B cell (primary cell): ENCODE measurements at regions of chr16 and their contacts with region 1.

Region 1: GRCh38 chr16:50152807-50153452 is at the start of gene TENT4B:
- DNase-seq: peak; percentile 96
- ATAC-seq: peak; percentile 81
- H3K4me3 ChIP-seq: peak within 1 kb of the TSS; percentile 46 to 93 (median 82)
- H3K4me3 Mint-ChIP-seq: peak within 1 kb of the TSS; percentile 90
- H3K27ac ChIP-seq: peak within 1 kb of the TSS; percentile 85 to 86
- H3K27ac Mint-ChIP-seq: peak within 1 kb of the TSS; percentile 94
- H3K4me1 ChIP-seq: peaks cover 23 to 28% of the 10 kb centered on the region in 2 donors
- H3K4me1 Mint-ChIP-seq: peaks cover 34% of the 10 kb centered on the region
- H3K27me3 ChIP-seq: no peaks in the 10 kb centered on the region
- H3K27me3 Mint-ChIP-seq: no peaks in the 10 kb centered on the region
- CTCF ChIP-seq: no peak
- total RNA-seq, gene TENT4B: 17.1 and 18.6 TPM in 2 replicates

Region 2: GRCh38 chr16:50024684-50025536 is 128.0 kb before region 1 on chr16 and contains the start of gene CNEP1R1:
- CTCF ChIA-PET with region 1: interaction called, 10 read pairs
- POLR2A ChIA-PET with region 1: interaction called, 4 read pairs
- intact Hi-C with region 1: loop called (anchors 2 kb)
- DNase-seq: peak; percentile 98
- ATAC-seq: peak; percentile 94
- H3K4me3 ChIP-seq: peak within 1 kb of the TSS; percentile 87 to 93 (median 92)
- H3K4me3 Mint-ChIP-seq: peak within 1 kb of the TSS; percentile 93
- H3K27ac ChIP-seq: peak within 1 kb of the TSS; percentile 31 to 78
- H3K27ac Mint-ChIP-seq: peak within 1 kb of the TSS; percentile 89
- H3K4me1 ChIP-seq: peaks cover 12 to 14% of the 10 kb centered on the region in 2 donors
- H3K4me1 Mint-ChIP-seq: peaks cover 23% of the 10 kb centered on the region
- H3K27me3 ChIP-seq: no peaks in the 10 kb centered on the region
- H3K27me3 Mint-ChIP-seq: peaks cover 7% of the 10 kb centered on the region
- CTCF ChIP-seq: peak; percentile 100
- total RNA-seq, gene CNEP1R1: 32.9 and 36.9 TPM in 2 replicates

Region 3: DNA sequence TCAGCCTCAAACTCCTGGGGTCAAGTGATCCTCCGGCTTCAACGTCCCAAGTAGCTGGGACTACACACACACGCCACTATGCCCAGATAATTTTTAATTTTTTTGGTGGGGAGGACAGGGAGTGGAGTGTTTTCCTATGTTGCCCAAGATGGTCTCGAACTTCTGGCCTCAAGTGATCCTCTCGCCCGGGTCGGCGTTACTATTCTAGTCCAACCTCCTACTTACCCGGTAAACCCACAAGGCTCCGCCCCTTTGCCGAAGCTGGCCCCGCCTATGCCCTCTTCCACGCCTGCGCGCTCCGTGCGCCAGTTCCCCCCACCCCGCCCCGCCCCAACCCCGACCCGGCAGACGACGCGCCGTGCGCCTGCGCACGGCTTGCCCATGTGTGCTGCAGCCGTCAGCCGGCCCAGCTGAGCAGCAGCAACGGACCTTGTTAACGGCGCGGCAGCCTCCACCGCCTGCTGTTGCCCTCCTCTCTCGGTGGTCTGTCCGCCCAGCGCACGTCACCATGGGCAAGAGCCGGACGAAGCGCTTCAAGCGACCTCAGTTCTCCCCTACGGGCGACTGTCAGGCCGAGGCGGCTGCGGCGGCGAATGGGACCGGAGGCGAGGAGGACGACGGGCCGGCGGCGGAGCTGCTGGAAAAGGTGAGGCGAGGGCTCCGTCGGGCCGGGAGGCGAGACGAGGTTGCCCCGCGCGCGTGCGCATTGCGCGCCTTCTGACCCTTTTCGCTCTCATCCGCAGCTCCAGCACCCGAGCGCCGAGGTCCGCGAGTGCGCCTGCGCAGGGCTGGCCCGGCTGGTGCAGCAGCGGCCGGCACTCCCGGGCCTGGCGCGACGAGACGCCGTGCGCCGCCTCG is 87.1 kb before region 1 on chr16 and contains the start of gene HEATR3:
- CTCF ChIA-PET with region 1: interaction called, 8 read pairs
- POLR2A ChIA-PET with region 1: interaction called, 6 read pairs
- intact Hi-C with region 1: loop called (anchors 1 kb)
- DNase-seq: peak; percentile 95
- ATAC-seq: peak; percentile 86
- H3K4me3 ChIP-seq: peak within 1 kb of the TSS; percentile 39 to 82 (median 75)
- H3K4me3 Mint-ChIP-seq: peak within 1 kb of the TSS; percentile 89
- H3K27ac ChIP-seq: peak within 1 kb of the TSS; percentile 47 to 63
- H3K27ac Mint-ChIP-seq: peak within 1 kb of the TSS; percentile 92
- H3K4me1 ChIP-seq: peaks cover 17 to 20% of the 10 kb centered on the region in 2 donors
- H3K4me1 Mint-ChIP-seq: peaks cover 35% of the 10 kb centered on the region
- H3K27me3 ChIP-seq: no peaks in the 10 kb centered on the region
- H3K27me3 Mint-ChIP-seq: no peaks in the 10 kb centered on the region
- CTCF ChIP-seq: no peak
- total RNA-seq, gene HEATR3: 21.0 and 21.2 TPM in 2 replicates

Region 4: DNA sequence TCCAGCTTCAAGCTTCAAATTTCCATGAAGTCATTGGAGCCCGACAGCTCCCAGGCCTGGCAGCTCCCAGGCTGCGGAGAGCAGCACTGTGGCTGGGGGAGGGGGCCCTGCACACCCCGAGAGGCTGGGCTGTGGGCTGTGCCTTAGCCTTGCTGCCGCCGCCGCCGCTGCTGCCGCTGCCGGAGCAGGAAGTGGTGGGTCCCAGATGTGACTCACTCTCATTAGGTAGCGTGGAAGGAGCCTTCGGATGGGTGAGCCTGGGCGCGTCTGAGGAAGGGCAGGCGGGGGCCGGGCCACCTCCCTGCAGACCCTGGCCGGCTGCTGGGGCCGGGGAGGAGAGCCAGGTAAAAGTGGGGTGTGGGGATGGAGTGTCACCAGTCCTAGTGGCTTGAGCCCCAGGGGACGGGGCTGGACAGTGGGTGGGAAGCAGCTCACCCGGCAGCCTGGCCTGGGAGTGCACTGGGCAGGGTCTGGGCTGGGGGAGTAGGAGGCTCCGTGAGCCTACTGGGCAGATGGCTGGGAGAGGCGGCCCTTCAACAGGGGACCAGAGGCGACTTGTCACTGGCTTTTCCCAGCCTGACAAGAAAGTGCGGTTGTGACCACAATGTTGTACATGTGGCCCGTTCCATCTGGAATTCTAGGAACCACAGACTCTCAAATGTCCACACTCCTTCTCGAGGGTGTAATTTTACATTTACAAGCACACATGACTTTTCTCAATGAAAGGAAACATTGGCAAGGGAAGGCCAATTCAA is 113.6 kb after region 1 on chr16 and contains the start of gene ADCY7:
- CTCF ChIA-PET with region 1: no interaction called
- POLR2A ChIA-PET with region 1: no interaction called
- intact Hi-C with region 1: loop called (anchors 5 kb)
- DNase-seq: peak; percentile 75
- ATAC-seq: peak; percentile 91
- H3K4me3 ChIP-seq: peak within 1 kb of the TSS; percentile 56 to 68 (median 59)
- H3K4me3 Mint-ChIP-seq: peak within 1 kb of the TSS; percentile 90
- H3K27ac ChIP-seq: peak within 1 kb of the TSS; percentile 43 to 79
- H3K27ac Mint-ChIP-seq: peak within 1 kb of the TSS; percentile 97
- H3K4me1 ChIP-seq: peaks cover 35 to 44% of the 10 kb centered on the region in 2 donors
- H3K4me1 Mint-ChIP-seq: peaks cover 62% of the 10 kb centered on the region
- H3K27me3 ChIP-seq: peaks cover 0 to 3% (median 0%) of the 10 kb centered on the region in 4 experiments
- H3K27me3 Mint-ChIP-seq: no peaks in the 10 kb centered on the region
- CTCF ChIP-seq: no peak
- total RNA-seq, gene ADCY7: 205 and 207 TPM in 2 replicates

Region 5: GRCh38 chr16:50281964-50282538 is 129.1 kb after region 1 on chr16:
- CTCF ChIA-PET with region 1: no interaction called
- POLR2A ChIA-PET with region 1: no interaction called
- intact Hi-C with region 1: loop called (anchors 5 kb)
- DNase-seq: peak; percentile 92
- ATAC-seq: peak; percentile 90
- H3K4me3 ChIP-seq: peak overlapping the region in 4 of 5 experiments; percentile 34 to 54 (median 50)
- H3K4me3 Mint-ChIP-seq: peak overlapping the region; percentile 84
- H3K27ac ChIP-seq: peak overlapping the region; percentile 65 to 93
- H3K27ac Mint-ChIP-seq: peak overlapping the region; percentile 100
- H3K4me1 ChIP-seq: peaks cover 85 to 87% of the 10 kb centered on the region in 2 donors
- H3K4me1 Mint-ChIP-seq: peaks cover 86% of the 10 kb centered on the region
- H3K27me3 ChIP-seq: no peaks in the 10 kb centered on the region
- H3K27me3 Mint-ChIP-seq: no peaks in the 10 kb centered on the region
- CTCF ChIP-seq: no peak

Region 6: DNA sequence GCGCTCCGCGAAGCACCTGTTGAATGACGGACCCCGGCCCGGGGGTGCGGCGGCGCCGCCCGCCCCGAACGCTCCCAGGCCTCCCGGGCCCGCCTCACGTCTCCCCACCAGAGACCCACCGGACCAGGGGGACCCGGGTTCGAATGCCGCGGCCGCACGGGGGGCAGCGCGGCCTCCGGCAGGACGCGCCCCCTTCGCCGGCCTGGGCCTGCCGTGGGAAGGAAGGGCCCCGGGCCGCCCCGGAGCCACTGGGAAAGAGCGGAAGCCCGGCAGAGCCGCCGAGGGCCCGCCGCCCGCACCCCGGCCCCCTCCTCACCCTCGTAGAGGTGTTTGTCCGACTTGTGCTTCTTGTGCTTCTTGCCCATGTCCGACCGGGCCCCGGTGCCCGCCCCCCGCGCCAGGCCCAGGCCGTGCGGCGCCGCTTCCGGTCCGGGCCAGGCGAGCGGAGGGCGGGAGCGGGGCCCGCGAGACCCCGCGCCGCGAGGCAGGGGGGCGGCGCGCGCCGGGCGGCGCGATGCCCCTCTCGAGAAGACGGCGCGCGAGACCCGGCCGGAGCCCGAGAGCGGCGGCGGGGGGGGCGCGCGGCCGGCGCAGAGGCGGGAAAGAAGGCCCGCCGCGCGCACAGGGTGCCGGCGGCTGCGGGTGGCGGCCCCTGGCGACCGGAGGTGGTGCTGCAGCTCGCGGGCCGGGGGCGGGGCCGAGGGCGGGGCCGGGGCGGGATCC is 215.6 kb after region 1 on chr16 and contains the start of gene BRD7:
- CTCF ChIA-PET with region 1: no interaction called
- POLR2A ChIA-PET with region 1: no interaction called
- intact Hi-C with region 1: loop called (anchors 2 kb)
- DNase-seq: peak; percentile 85
- ATAC-seq: peak; percentile 95
- H3K4me3 ChIP-seq: peak within 1 kb of the TSS; percentile 45 to 82 (median 66)
- H3K4me3 Mint-ChIP-seq: peak within 1 kb of the TSS; percentile 91
- H3K27ac ChIP-seq: peak within 1 kb of the TSS; percentile 57 to 88
- H3K27ac Mint-ChIP-seq: peak within 1 kb of the TSS; percentile 88
- H3K4me1 ChIP-seq: peaks cover 26 to 32% of the 10 kb centered on the region in 2 donors
- H3K4me1 Mint-ChIP-seq: peaks cover 41% of the 10 kb centered on the region
- H3K27me3 ChIP-seq: no peaks in the 10 kb centered on the region
- H3K27me3 Mint-ChIP-seq: peaks cover 4% of the 10 kb centered on the region
- CTCF ChIP-seq: peak; percentile 56
- total RNA-seq, gene BRD7: 64.5 and 69.7 TPM in 2 replicates